ENCODE measurements at regions of chr20 and their contacts with region 1.

Region 1: GRCh38 chr20:41617931-41618806 is at the start of gene CHD6:
- DNase-seq: peak; percentile 100
- H3K4me3 ChIP-seq: peak within 1 kb of the TSS; percentile 71 to 96 (median 80)
- H3K27ac ChIP-seq: peak within 1 kb of the TSS; percentile 82 to 89 (median 86)
- H3K4me1 ChIP-seq: peaks cover 22 to 51% (median 40%) of the 10 kb centered on the region in 4 donors
- H3K27me3 ChIP-seq: no peaks in the 10 kb centered on the region
- CTCF ChIP-seq: no peak
- EP300 ChIP-seq: no peak
- POLR2A ChIP-seq: no peak
- total RNA-seq, gene CHD6: 32.5 to 37.7 (median 35.0) TPM

Region 2: DNA sequence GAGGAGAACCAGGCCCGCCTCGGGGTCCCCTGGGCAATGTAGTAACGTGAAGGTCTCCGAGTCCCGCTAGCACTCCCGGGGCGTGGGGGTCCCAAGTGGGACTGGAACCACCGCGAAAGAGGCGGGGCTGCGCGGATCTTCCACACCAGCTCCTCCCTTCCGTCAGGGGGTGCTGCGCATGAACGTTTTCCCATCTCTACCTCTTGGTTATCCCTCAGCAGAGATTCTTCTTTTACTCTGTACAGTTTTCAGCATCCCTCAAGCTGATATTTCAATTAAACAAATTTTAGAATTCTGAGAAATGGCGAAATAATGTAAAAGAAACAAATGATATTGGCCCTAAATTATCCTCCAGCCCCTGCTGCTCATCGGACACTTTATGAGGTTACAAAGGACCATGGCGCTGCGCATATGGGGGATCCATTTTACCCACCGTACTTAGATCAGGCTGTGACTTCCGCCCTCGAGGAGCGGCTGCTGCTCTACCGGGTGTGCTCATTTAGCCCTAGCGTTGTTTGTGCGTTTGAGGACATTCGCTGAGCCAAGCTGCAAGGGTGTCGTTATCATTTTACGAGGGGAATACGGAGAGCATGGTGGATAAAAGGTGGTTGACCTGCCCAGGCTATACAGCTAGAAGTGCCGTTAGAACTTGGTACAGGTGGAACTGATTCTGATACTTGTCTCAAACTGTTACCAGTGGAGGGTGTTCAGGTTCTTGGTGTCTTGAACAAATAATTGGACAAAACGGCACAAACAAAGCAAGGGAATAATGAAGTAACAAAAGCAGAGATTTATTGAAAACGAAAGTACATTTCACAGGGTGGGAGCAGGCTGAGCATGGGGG is 75.2 kb after region 1 on chr20:
- intact Hi-C with region 1: loop called (anchors 5 kb)
- DNase-seq: peak; percentile 97
- H3K4me3 ChIP-seq: peak overlapping the region; percentile 80 to 89 (median 82)
- H3K27ac ChIP-seq: peak overlapping the region; percentile 87 to 93 (median 92)
- H3K4me1 ChIP-seq: peaks cover 7 to 14% (median 10%) of the 10 kb centered on the region in 4 donors
- H3K27me3 ChIP-seq: no peaks in the 10 kb centered on the region
- CTCF ChIP-seq: peak; percentile 43 to 57 (median 47)
- EP300 ChIP-seq: no peak
- POLR2A ChIP-seq: peak; percentile 23